ENCODE measurements at regions of chr15 and their contacts with region 1.

Region 1: GRCh38 chr15:41774062-41774881 is at the start of gene MAPKBP1:
- DNase-seq: peak; percentile 97 to 99 (median 98)
- H3K4me3 ChIP-seq: peak within 1 kb of the TSS; percentile 67 to 83
- H3K4me3 Mint-ChIP-seq: peak within 1 kb of the TSS; percentile 91 to 99 (median 96)
- H3K27ac ChIP-seq: peak within 1 kb of the TSS; percentile 75
- H3K27ac Mint-ChIP-seq: peak within 1 kb of the TSS; percentile 95 to 98 (median 97)
- H3K4me1 ChIP-seq: peaks cover 57% of the 10 kb centered on the region
- H3K4me1 Mint-ChIP-seq: peaks cover 46 to 65% (median 53%) of the 10 kb centered on the region in 4 donors
- H3K27me3 ChIP-seq: no peaks in the 10 kb centered on the region
- H3K27me3 Mint-ChIP-seq: no peaks in the 10 kb centered on the region
- total RNA-seq, gene MAPKBP1: 39.7 to 42.6 TPM

Region 2: DNA sequence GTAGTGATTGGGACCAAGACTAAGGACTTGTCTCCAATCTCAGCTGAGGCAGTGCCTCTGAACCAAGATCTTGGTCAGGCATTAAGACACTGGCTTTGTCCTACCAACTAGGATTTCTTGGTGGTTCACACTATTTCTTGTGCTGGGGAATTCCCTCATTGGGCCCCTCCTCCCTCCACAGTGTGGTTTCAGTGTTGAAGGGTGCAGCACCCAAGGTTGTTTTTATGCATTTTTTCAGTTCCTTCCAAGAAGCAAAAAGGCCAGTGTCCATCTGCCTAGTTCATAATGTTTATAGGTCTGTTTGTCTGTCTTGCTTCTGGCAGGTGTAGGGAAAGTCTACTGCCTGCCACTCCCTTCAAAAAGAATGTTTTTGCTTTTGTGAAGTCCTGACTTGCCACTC is 291.2 kb before region 1 on chr15:
- CTCF ChIA-PET with region 1: no interaction called
- POLR2A ChIA-PET with region 1: no interaction called
- intact Hi-C with region 1: no loop called
- DNase-seq: peak; percentile 31 to 70 (median 41)
- H3K4me3 ChIP-seq: peak overlapping the region in 1 of 2 donors; percentile 7
- H3K4me3 Mint-ChIP-seq: peak overlapping the region; percentile 60 to 86 (median 76)
- H3K27ac ChIP-seq: peak overlapping the region; percentile 46
- H3K27ac Mint-ChIP-seq: peak overlapping the region; percentile 76 to 93 (median 84)
- H3K4me1 ChIP-seq: peaks cover 20% of the 10 kb centered on the region
- H3K4me1 Mint-ChIP-seq: peaks cover 11 to 26% (median 20%) of the 10 kb centered on the region in 4 donors
- H3K27me3 ChIP-seq: no peaks in the 10 kb centered on the region
- H3K27me3 Mint-ChIP-seq: no peaks in the 10 kb centered on the region

Region 3: GRCh38 chr15:41603941-41604911 is 170.0 kb before region 1 on chr15:
- CTCF ChIA-PET with region 1: interaction called, 7 read pairs
- POLR2A ChIA-PET with region 1: no interaction called
- intact Hi-C with region 1: loop called (anchors 1 kb)
- DNase-seq: peak; percentile 53 to 58 (median 53)
- H3K4me3 ChIP-seq: peak overlapping the region in 1 of 2 donors; percentile 36
- H3K4me3 Mint-ChIP-seq: peak overlapping the region; percentile 49 to 87 (median 78)
- H3K27ac ChIP-seq: no peak overlapping the region
- H3K27ac Mint-ChIP-seq: peak overlapping the region in 1 of 7 donors; percentile 68
- H3K4me1 ChIP-seq: peaks cover 6% of the 10 kb centered on the region
- H3K4me1 Mint-ChIP-seq: peaks cover 8 to 10% (median 9%) of the 10 kb centered on the region in 4 donors
- H3K27me3 ChIP-seq: peaks cover 3% of the 10 kb centered on the region
- H3K27me3 Mint-ChIP-seq: peaks cover 13 to 15% of the 10 kb centered on the region in 2 donors

Region 4: GRCh38 chr15:41801850-41802455 is 27.7 kb after region 1 on chr15:
- CTCF ChIA-PET with region 1: interaction called, 327 read pairs
- POLR2A ChIA-PET with region 1: interaction called, 3 read pairs
- intact Hi-C with region 1: no loop called
- DNase-seq: no peak
- H3K4me3 ChIP-seq: no peak overlapping the region
- H3K4me3 Mint-ChIP-seq: no peak overlapping the region
- H3K27ac ChIP-seq: no peak overlapping the region
- H3K27ac Mint-ChIP-seq: no peak overlapping the region
- H3K4me1 ChIP-seq: no peaks in the 10 kb centered on the region
- H3K4me1 Mint-ChIP-seq: peaks cover 0 to 8% (median 5%) of the 10 kb centered on the region in 4 donors
- H3K27me3 ChIP-seq: no peaks in the 10 kb centered on the region
- H3K27me3 Mint-ChIP-seq: no peaks in the 10 kb centered on the region

Region 5: GRCh38 chr15:41827880-41828806 is 53.9 kb after region 1 on chr15 and contains the start of gene JMJD7:
- CTCF ChIA-PET with region 1: interaction called, 11 read pairs
- POLR2A ChIA-PET with region 1: interaction called, 16 read pairs
- intact Hi-C with region 1: loop called (anchors 1 kb)
- DNase-seq: peak; percentile 88 to 92 (median 89)
- H3K4me3 ChIP-seq: peak within 1 kb of the TSS; percentile 94 to 95
- H3K4me3 Mint-ChIP-seq: peak within 1 kb of the TSS; percentile 91 to 99 (median 94)
- H3K27ac ChIP-seq: peak within 1 kb of the TSS; percentile 74
- H3K27ac Mint-ChIP-seq: peak within 1 kb of the TSS; percentile 83 to 98 (median 95)
- H3K4me1 ChIP-seq: peaks cover 48% of the 10 kb centered on the region
- H3K4me1 Mint-ChIP-seq: peaks cover 30 to 54% (median 43%) of the 10 kb centered on the region in 4 donors
- H3K27me3 ChIP-seq: no peaks in the 10 kb centered on the region
- H3K27me3 Mint-ChIP-seq: no peaks in the 10 kb centered on the region
- total RNA-seq, gene JMJD7: 75.0 to 78.5 TPM

Region 6: GRCh38 chr15:41894791-41895463 is 120.7 kb after region 1 on chr15:
- CTCF ChIA-PET with region 1: interaction called, 287 read pairs
- POLR2A ChIA-PET with region 1: interaction called, 23 read pairs
- intact Hi-C with region 1: loop called (anchors 2 kb)
- DNase-seq: peak; percentile 86 to 95 (median 87)
- H3K4me3 ChIP-seq: peak overlapping the region; percentile 12 to 29
- H3K4me3 Mint-ChIP-seq: peak overlapping the region; percentile 69 to 91 (median 80)
- H3K27ac ChIP-seq: peak overlapping the region; percentile 80
- H3K27ac Mint-ChIP-seq: peak overlapping the region; percentile 97 to 99 (median 99)
- H3K4me1 ChIP-seq: peaks cover 38% of the 10 kb centered on the region
- H3K4me1 Mint-ChIP-seq: peaks cover 14 to 66% (median 36%) of the 10 kb centered on the region in 4 donors
- H3K27me3 ChIP-seq: no peaks in the 10 kb centered on the region
- H3K27me3 Mint-ChIP-seq: no peaks in the 10 kb centered on the region

Region 7: DNA sequence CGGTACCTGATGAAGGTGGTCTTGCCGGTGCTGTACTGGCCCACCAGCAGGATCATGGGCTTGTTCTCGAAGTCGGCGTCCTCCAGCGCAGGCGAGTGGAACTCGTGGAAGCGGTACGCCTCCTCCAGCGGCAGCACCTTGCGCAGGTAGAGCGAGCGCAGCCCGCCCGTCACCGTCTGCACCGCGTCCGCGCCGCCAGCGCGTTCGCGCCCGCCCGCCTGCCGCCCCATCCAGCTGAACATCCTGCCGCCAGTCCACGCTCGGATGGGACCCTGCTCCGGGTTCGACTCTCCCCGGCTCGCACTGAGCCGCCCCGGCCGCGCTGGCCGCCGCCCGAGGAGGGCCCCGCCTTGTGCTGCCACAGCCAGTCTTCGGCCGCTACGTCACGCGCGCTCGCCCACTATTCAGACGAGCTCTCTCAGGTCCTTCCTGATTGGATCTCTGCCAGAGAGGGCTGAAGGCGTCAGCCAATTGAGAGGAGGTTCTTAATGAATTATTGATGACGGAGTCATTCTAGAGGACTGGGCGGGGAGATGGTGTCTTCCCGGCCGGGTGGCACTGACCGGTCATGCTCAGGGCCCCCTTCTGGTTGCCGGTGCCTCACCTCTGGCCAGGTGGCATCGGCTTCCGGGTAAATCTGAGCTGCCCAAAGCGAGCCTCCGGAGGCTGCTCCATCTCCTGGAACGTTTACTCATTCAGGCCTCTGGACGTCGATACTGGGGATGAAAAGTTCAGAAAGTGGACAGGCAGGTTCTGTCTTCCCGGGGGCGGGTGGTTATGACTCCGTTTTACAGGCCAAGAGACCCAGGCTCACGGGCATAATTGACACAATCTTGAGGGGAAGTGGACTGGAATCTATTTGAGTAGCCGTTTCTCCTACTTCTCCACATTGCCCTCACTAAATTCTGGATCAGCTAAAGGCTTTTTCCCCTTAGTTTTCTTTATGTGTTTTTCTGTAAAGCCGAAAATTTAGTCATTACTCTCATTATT is 198.3 kb after region 1 on chr15 and contains the start of gene EHD4:
- CTCF ChIA-PET with region 1: interaction called, 8 read pairs
- POLR2A ChIA-PET with region 1: interaction called, 17 read pairs
- intact Hi-C with region 1: loop called (anchors 2 kb)
- DNase-seq: peak; percentile 94 to 97 (median 95)
- H3K4me3 ChIP-seq: peak within 1 kb of the TSS; percentile 76 to 79
- H3K4me3 Mint-ChIP-seq: peak within 1 kb of the TSS; percentile 92 to 97 (median 94)
- H3K27ac ChIP-seq: peak within 1 kb of the TSS; percentile 87
- H3K27ac Mint-ChIP-seq: peak within 1 kb of the TSS; percentile 85 to 98 (median 97)
- H3K4me1 ChIP-seq: peaks cover 49% of the 10 kb centered on the region
- H3K4me1 Mint-ChIP-seq: peaks cover 31 to 53% (median 40%) of the 10 kb centered on the region in 4 donors
- H3K27me3 ChIP-seq: no peaks in the 10 kb centered on the region
- H3K27me3 Mint-ChIP-seq: peaks cover 5% of the 10 kb centered on the region in 2 donors
- total RNA-seq, gene EHD4: 15.2 to 15.6 TPM

Region 8: GRCh38 chr15:42084460-42085235 is 310.4 kb after region 1 on chr15:
- CTCF ChIA-PET with region 1: interaction called, 20 read pairs
- POLR2A ChIA-PET with region 1: interaction called, 4 read pairs
- intact Hi-C with region 1: loop called (anchors 2 kb)
- DNase-seq: peak in 4 of 5 donors; percentile 19 to 34 (median 22)
- H3K4me3 ChIP-seq: no peak overlapping the region
- H3K4me3 Mint-ChIP-seq: peak overlapping the region in 3 of 8 donors; percentile 33 to 38 (median 36)
- H3K27ac ChIP-seq: no peak overlapping the region
- H3K27ac Mint-ChIP-seq: peak overlapping the region in 2 of 7 donors; percentile 9 to 41
- H3K4me1 ChIP-seq: peaks cover 10% of the 10 kb centered on the region
- H3K4me1 Mint-ChIP-seq: peaks cover 0 to 10% (median 2%) of the 10 kb centered on the region in 4 donors
- H3K27me3 ChIP-seq: no peaks in the 10 kb centered on the region
- H3K27me3 Mint-ChIP-seq: peaks cover 6% of the 10 kb centered on the region in 2 donors

Region 9: GRCh38 chr15:42253300-42253699 is 479.0 kb after region 1 on chr15:
- CTCF ChIA-PET with region 1: no interaction called
- POLR2A ChIA-PET with region 1: no interaction called
- intact Hi-C with region 1: no loop called
- DNase-seq: no peak
- H3K4me3 ChIP-seq: no peak overlapping the region
- H3K4me3 Mint-ChIP-seq: no peak overlapping the region
- H3K27ac ChIP-seq: no peak overlapping the region
- H3K27ac Mint-ChIP-seq: peak overlapping the region in 2 of 7 donors; percentile 11 to 38
- H3K4me1 ChIP-seq: no peaks in the 10 kb centered on the region
- H3K4me1 Mint-ChIP-seq: peaks cover 4 to 11% (median 9%) of the 10 kb centered on the region in 4 donors
- H3K27me3 ChIP-seq: no peaks in the 10 kb centered on the region
- H3K27me3 Mint-ChIP-seq: no peaks in the 10 kb centered on the region

Measured in CD4-positive, alpha-beta memory T cell (primary cell).